PC-9 (cell line): ENCODE measurements at regions of chr19 and their contacts with region 1.

Region 1: DNA sequence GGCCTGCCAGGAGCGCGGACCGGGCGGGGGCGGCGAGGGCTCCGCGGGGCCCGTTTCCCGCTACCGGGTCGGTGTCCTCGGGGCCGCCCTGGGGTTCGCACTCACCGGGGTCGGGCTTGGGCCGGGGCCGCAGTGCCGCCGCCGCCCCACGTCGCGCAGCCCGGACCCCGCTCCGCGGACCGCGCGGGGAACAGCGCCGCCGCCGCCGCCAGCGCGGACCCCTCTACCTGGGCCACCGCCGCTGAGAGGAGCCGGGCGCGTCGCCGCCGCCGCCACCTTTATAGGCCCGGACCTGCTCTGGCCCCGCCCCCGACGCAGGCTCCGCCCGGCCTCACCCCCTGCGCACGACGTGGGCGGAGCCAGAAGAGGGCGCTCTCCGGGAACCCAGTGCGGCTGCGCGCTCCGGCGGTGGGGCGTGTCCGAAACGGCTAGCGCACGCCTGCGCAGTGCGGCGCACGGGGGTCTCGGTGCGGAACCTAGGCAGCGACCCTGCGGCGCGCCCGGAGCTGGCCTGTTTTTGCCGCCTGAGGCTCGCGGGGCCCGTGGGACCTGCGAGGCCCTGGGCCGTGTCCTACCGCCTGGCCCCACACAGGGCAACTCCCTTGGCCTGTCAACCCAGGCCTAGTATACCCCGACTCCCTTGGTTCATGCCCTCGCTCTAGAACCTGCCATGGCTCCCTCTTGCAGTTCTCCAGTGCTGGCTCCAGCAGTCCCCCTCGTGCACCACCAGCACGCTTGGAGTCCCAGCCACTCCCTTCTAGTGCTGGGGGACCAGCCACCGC is at the start of gene MKNK2:
- DNase-seq: peak; percentile 46 to 84
- H3K4me3 ChIP-seq: peak within 1 kb of the TSS; percentile 87
- H3K27ac ChIP-seq: peak within 1 kb of the TSS; percentile 55
- H3K4me1 ChIP-seq: peaks cover 21% of the 10 kb centered on the region
- H3K27me3 ChIP-seq: no peaks in the 10 kb centered on the region
- CTCF ChIP-seq: peak; percentile 63
- total RNA-seq, gene MKNK2: 132 and 166 TPM in 2 replicates

Region 2: DNA sequence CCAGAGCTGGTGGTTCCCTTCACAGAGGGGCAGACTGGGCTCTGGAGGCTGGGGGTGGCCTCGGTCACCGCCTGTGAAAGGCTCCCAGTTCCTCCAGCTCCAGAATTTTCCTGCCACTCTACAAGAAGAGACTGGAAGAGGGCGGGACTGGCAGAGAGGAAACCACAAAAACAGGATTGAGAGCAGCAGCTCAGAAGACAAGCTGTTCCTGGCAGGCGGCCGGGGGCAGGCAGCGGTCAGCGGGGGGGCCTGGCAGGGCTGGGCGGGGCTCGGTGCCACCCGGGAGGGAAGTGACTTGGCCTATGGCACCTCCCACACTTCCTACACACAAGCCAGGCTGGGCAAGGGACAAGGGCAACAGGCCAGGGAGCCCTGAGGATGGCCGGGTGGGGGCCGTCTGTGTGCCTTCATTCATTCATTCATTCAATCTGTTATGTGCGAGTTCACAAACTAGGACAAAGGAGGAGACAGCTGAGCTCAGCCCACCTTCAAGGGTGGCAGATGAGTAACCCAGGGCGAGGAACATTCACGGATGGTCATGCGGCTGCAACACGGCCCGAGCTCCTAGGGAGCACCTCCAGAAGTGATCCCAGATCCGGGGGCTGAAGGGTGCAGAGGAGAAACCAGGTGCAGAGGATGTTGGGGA is 18.8 kb before region 1 on chr19:
- CTCF ChIA-PET with region 1: no interaction called
- POLR2A ChIA-PET with region 1: no interaction called
- intact Hi-C with region 1: loop called (anchors 2 kb)
- DNase-seq: peak; percentile 85 to 94
- H3K4me3 ChIP-seq: peak overlapping the region; percentile 40; the same call in 1 of the 2 replicates
- H3K27ac ChIP-seq: peak overlapping the region; percentile 78
- H3K4me1 ChIP-seq: peaks cover 25% of the 10 kb centered on the region
- H3K27me3 ChIP-seq: no peaks in the 10 kb centered on the region
- CTCF ChIP-seq: no peak

Region 3: DNA sequence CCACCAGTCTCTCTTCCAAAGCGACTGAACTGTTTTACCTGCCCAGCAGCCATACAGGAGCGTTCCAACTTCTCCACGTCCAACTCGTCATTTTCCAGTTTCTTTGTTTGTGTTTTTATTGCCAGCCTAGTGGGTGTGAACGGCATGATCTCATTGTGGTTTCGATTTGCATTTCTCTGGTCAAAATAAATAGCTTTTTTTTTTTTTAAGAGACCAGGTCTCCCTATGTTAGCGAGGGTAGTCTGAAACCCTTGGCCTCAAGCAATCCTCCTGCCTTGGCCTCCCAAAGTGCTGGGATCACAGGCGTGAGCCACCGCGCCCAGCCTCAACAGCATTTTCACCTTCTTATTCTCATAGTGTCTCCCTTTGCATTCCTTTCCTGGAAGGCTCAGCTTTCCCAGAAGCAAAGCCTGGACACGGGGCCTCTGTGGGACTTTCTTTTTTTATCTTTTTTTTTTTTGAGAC is 209.2 kb after region 1 on chr19:
- CTCF ChIA-PET with region 1: no interaction called
- POLR2A ChIA-PET with region 1: interaction called, 13 read pairs
- intact Hi-C with region 1: no loop called
- DNase-seq: peak; percentile 27 to 71
- H3K4me3 ChIP-seq: no peak overlapping the region
- H3K27ac ChIP-seq: peak overlapping the region; percentile 78
- H3K4me1 ChIP-seq: peaks cover 9% of the 10 kb centered on the region
- H3K27me3 ChIP-seq: no peaks in the 10 kb centered on the region
- CTCF ChIP-seq: no peak

Region 4: DNA sequence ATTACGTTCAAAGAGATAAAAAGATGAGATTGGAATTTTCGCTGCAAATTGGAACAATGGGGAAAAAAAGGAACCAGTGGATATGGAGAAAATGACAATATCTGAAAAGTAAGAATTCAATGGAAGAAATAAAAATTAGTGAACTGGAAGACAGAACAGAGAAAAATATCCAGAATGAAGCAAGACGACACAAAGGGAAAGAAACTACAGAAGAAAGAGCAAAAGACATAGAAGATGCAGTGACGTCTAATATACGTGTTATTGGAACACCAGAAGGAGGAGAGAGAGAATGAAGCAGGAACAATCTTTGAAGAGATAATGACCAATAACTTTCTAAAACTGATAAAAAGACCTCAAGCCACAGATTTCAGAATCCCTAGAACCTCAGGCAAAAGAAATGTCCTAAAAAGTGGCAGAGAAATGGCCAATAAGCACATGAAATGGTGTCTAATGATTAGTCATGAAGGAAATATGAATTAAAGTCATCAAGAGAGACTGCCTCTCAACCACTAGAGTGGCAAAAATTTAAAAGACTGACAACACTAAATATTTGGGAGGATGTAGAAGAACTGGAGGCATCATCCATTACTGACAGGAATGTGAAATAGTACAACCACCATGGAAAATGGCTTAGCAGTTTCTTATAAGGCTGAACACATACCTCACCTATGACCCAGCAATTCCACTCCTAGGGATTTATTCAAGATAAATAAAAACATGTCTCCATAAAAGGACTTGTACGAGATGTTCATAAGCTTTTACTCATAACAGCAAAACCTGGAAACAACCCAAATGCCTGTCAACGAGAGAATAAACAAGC is 481.3 kb after region 1 on chr19:
- CTCF ChIA-PET with region 1: no interaction called
- POLR2A ChIA-PET with region 1: interaction called, 14 read pairs
- intact Hi-C with region 1: no loop called
- DNase-seq: peak in 1 of 2 experiments; percentile 96
- H3K4me3 ChIP-seq: no peak overlapping the region
- H3K27ac ChIP-seq: peak overlapping the region; percentile 99
- H3K4me1 ChIP-seq: peaks cover 74% of the 10 kb centered on the region
- H3K27me3 ChIP-seq: no peaks in the 10 kb centered on the region
- CTCF ChIP-seq: no peak